ENCODE measurements at regions of chr5 and their contacts with region 1.

Region 1: DNA sequence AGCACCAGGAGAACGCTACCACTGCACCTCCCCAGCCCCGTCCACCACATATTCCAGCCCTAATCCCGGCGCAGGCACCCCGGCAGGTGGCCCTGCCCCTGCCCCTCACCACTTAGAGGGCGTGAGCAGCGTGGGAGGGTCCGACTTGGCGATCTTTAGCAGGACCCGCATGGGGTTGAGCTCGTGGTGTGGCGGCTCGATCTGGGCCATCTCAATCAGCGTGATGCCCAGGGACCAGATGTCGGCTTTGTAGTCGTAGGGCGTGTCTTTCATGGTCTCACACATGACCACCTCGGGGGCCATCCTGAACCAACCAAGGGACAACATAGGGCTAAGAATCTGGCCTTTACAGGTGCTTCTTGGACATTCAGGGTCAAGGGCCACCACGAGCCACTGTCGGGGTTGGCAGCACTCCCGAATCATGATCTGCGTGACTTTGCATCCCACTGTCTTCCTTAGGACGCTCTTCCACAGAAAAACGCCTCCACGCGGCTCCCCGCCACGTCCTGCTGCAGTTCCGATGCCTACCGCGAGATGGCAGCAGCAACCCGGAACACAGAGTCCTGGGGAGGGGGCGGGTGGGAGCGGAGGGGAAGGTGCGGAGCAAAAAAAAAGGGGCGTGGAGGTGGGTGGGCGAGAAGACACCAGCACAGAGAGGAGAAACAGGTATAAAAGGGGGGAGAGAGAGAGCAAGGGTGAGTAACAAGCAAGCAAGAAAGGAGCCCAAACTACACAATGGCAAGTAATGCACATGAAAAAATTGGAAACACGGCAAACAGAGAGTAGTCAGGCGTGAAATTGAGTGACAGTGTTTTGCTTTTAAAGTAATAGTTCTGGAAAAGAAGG is 81.3 kb downstream of the STK10 start:
- DNase-seq: peak; percentile 46
- H3K4me3 ChIP-seq: no peak overlapping the region
- H3K27ac ChIP-seq: no peak overlapping the region
- H3K4me1 ChIP-seq: peaks cover 34% of the 10 kb centered on the region
- H3K27me3 ChIP-seq: no peaks in the 10 kb centered on the region
- CTCF ChIP-seq: peak; percentile 78 to 97
- POLR2A ChIP-seq: no peak

Region 2: GRCh38 chr5:172006321-172007174 is 100.2 kb before region 1 on chr5 and contains the start of gene FBXW11:
- CTCF ChIA-PET with region 1: interaction called, 3 read pairs
- POLR2A ChIA-PET with region 1: no interaction called
- dilution Hi-C with region 1: no loop called
- intact Hi-C with region 1: loop called (anchors 2 kb)
- DNase-seq: peak; percentile 95
- H3K4me3 ChIP-seq: peak within 1 kb of the TSS; percentile 66 to 98 (median 88)
- H3K27ac ChIP-seq: peak within 1 kb of the TSS; percentile 78
- H3K4me1 ChIP-seq: peaks cover 44% of the 10 kb centered on the region
- H3K27me3 ChIP-seq: no peaks in the 10 kb centered on the region
- CTCF ChIP-seq: no peak
- POLR2A ChIP-seq: peak; percentile 96
- total RNA-seq, gene FBXW11: 42.3 and 44.7 TPM in 2 replicates

Region 3: DNA sequence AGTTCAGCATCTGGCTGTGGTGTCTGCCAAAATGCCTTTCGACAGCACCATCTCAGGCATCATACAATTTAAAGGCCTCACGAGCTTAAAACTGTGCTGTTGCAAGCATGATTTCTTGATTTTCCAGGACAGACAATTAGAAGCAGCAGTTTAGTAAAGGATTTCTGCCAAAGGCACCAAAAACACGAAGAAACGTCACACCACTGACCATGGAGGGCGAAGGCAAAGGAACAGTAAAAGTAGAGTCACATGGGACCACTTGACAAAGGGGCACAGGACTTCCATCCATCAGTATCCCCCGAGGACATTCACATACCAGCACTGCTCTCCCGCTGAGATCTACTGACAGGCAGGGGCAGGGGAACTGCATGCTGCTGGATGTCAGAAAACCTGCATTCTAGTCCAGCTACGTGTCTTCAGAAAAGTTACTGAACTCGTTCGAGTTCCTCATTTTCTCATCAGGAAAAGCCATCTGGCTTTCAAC is 29.9 kb before region 1 on chr5:
- CTCF ChIA-PET with region 1: no interaction called
- POLR2A ChIA-PET with region 1: no interaction called
- dilution Hi-C with region 1: no loop called
- intact Hi-C with region 1: no loop called
- DNase-seq: no peak
- H3K4me3 ChIP-seq: no peak overlapping the region
- H3K27ac ChIP-seq: no peak overlapping the region
- H3K4me1 ChIP-seq: no peaks in the 10 kb centered on the region
- H3K27me3 ChIP-seq: no peaks in the 10 kb centered on the region
- CTCF ChIP-seq: no peak
- POLR2A ChIP-seq: no peak

Region 4: GRCh38 chr5:172156541-172156994 is 49.8 kb after region 1 on chr5:
- CTCF ChIA-PET with region 1: interaction called, 4 read pairs
- POLR2A ChIA-PET with region 1: no interaction called
- dilution Hi-C with region 1: no loop called
- intact Hi-C with region 1: loop called (anchors 1 kb)
- DNase-seq: peak; percentile 98
- H3K4me3 ChIP-seq: no peak overlapping the region
- H3K27ac ChIP-seq: peak overlapping the region; percentile 75
- H3K4me1 ChIP-seq: peaks cover 15% of the 10 kb centered on the region
- H3K27me3 ChIP-seq: no peaks in the 10 kb centered on the region
- CTCF ChIP-seq: no peak
- POLR2A ChIP-seq: peak; percentile 25

Region 5: GRCh38 chr5:172283020-172283861 is 176.5 kb after region 1 on chr5 and contains the start of gene UBTD2:
- CTCF ChIA-PET with region 1: interaction called, 9 read pairs
- POLR2A ChIA-PET with region 1: interaction called, 3 read pairs
- dilution Hi-C with region 1: no loop called
- intact Hi-C with region 1: loop called (anchors 1 kb)
- DNase-seq: peak; percentile 79
- H3K4me3 ChIP-seq: peak within 1 kb of the TSS; percentile 73 to 93 (median 92)
- H3K27ac ChIP-seq: peak within 1 kb of the TSS; percentile 82
- H3K4me1 ChIP-seq: peaks cover 21% of the 10 kb centered on the region
- H3K27me3 ChIP-seq: no peaks in the 10 kb centered on the region
- CTCF ChIP-seq: peak; percentile 35 to 65
- POLR2A ChIP-seq: peak; percentile 84
- total RNA-seq, gene UBTD2: 21.6 and 22.6 TPM in 2 replicates

Region 6: GRCh38 chr5:172293054-172293744 is 186.5 kb after region 1 on chr5:
- CTCF ChIA-PET with region 1: interaction called, 36 read pairs
- POLR2A ChIA-PET with region 1: no interaction called
- dilution Hi-C with region 1: no loop called
- intact Hi-C with region 1: loop called (anchors 1 kb)
- DNase-seq: peak; percentile 63
- H3K4me3 ChIP-seq: no peak overlapping the region
- H3K27ac ChIP-seq: no peak overlapping the region
- H3K4me1 ChIP-seq: no peaks in the 10 kb centered on the region
- H3K27me3 ChIP-seq: peaks cover 2 to 7% of the 10 kb centered on the region in 2 experiments
- CTCF ChIP-seq: peak; percentile 81 to 87
- POLR2A ChIP-seq: no peak

Measured in endothelial cell of umbilical vein (primary cell).